ENCODE measurements at regions of chr9 and their contacts with region 1.

Region 1: DNA sequence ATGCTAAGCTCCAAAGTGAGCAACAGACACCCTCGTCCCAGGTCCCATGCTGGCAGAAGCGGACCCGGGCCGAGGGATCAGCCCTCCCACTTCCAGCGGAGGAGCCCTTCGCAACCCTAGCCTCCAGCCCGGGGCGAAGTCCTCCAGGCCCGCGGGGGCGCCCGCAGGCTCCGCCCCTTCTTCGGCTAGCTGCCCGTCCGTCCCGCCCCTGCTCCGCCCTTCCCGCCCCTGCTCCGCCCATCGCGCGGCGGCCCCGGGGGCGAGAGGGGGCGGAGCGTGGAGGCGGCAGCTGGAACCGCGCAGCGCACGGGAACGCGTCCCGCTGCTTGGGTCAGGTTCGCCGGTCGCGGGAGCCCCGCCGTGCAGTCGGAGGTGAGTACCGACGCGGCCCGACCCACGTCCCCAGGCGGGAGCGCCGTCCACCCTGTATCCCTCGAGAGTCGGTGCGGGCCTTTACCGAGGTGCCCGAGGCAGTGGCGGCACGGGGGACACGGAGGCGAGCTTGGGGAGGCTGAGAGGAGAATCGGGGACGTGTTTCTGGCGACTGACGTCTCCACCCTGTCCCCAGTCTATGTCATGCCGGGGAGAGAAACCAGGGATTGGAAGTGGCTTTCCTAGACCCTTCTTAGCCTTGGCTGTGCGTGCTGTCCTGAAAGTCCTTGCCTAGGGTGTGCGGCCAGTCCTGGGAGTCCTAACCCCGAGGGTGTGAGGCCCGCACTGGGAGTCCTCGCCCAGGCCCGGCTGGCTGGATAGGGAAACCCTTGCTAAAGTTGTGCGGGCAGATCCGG is at the start of gene ACO1:
- DNase-seq: peak; percentile 93 to 97
- H3K4me3 ChIP-seq: peak within 1 kb of the TSS; percentile 69 to 84 (median 72)
- H3K27ac ChIP-seq: peak within 1 kb of the TSS; percentile 73 to 94 (median 91)
- H3K4me1 ChIP-seq: peaks cover 20 to 46% (median 32%) of the 10 kb centered on the region in 4 donors
- H3K27me3 ChIP-seq: no peaks in the 10 kb centered on the region
- CTCF ChIP-seq: no peak
- EP300 ChIP-seq: peak; percentile 40
- POLR2A ChIP-seq: peak in 2 of 4 donors; percentile 40 to 55
- total RNA-seq, gene ACO1: 5.8 to 44.2 (median 33.5) TPM

Region 2: GRCh38 chr9:32426278-32426939 is 41.9 kb after region 1 on chr9:
- intact Hi-C with region 1: loop called (anchors 5 kb)
- DNase-seq: peak; percentile 68 to 78
- H3K4me3 ChIP-seq: no peak overlapping the region
- H3K27ac ChIP-seq: peak overlapping the region; percentile 69 to 77 (median 75)
- H3K4me1 ChIP-seq: peaks cover 3 to 29% (median 10%) of the 10 kb centered on the region in 4 donors
- H3K27me3 ChIP-seq: no peaks in the 10 kb centered on the region
- CTCF ChIP-seq: no peak
- EP300 ChIP-seq: no peak
- POLR2A ChIP-seq: no peak

Measured in stomach (tissue), 19 donors.